ENCODE measurements at regions of chr1 and their contacts with region 1.

Region 1: GRCh38 chr1:85259118-85259911 is at the start of gene C1orf52:
- DNase-seq: peak; percentile 91 to 93 (median 91)
- H3K4me3 ChIP-seq: peak within 1 kb of the TSS; percentile 51 to 87 (median 63)
- H3K4me3 Mint-ChIP-seq: peak within 1 kb of the TSS; percentile 90 to 98
- H3K27ac ChIP-seq: peak within 1 kb of the TSS; percentile 62 to 89
- H3K27ac Mint-ChIP-seq: peak within 1 kb of the TSS; percentile 94 to 98 (median 96)
- H3K4me1 ChIP-seq: peaks cover 7 to 19% of the 10 kb centered on the region in 2 donors
- H3K4me1 Mint-ChIP-seq: peaks cover 22% of the 10 kb centered on the region
- H3K27me3 ChIP-seq: no peaks in the 10 kb centered on the region
- H3K27me3 Mint-ChIP-seq: no peaks in the 10 kb centered on the region
- CTCF ChIP-seq: peak; percentile 99
- polyA plus RNA-seq, gene C1orf52: 18.5 to 29.1 (median 19.7) TPM

Region 2: DNA sequence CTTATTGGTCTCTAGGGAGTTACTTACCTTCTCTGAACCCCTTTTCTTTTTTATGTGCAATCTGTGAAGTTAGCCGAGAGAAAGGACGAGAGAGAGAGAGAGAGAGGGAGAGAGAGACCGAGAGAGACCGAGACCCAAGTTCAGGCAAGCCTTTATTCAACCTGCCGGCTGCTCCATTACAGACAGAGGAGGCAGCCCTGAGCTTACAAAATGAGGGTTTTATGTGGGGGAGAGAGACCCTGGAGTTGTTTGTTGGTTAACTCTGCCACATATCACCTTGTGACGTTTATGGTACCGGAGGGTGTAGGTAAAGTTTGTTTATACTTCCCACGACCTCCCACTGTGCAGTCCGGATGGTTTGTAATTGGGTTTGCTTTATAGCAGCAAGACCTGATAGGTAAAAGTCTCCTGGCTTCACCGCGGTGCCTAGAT is 209.6 kb before region 1 on chr1:
- intact Hi-C with region 1: loop called in 1 of 2 experiments (anchors 10 kb)
- DNase-seq: no peak
- H3K4me3 ChIP-seq: no peak overlapping the region
- H3K4me3 Mint-ChIP-seq: peak overlapping the region in 1 of 2 donors; percentile 37
- H3K27ac ChIP-seq: no peak overlapping the region
- H3K27ac Mint-ChIP-seq: peak overlapping the region in 2 of 7 donors; percentile 8 to 17
- H3K4me1 ChIP-seq: peaks cover 12 to 17% of the 10 kb centered on the region in 2 donors
- H3K4me1 Mint-ChIP-seq: peaks cover 10% of the 10 kb centered on the region
- H3K27me3 ChIP-seq: peaks cover 64 to 68% of the 10 kb centered on the region in 2 donors
- H3K27me3 Mint-ChIP-seq: peaks cover 56 to 64% (median 58%) of the 10 kb centered on the region in 3 donors
- CTCF ChIP-seq: no peak

Region 3: DNA sequence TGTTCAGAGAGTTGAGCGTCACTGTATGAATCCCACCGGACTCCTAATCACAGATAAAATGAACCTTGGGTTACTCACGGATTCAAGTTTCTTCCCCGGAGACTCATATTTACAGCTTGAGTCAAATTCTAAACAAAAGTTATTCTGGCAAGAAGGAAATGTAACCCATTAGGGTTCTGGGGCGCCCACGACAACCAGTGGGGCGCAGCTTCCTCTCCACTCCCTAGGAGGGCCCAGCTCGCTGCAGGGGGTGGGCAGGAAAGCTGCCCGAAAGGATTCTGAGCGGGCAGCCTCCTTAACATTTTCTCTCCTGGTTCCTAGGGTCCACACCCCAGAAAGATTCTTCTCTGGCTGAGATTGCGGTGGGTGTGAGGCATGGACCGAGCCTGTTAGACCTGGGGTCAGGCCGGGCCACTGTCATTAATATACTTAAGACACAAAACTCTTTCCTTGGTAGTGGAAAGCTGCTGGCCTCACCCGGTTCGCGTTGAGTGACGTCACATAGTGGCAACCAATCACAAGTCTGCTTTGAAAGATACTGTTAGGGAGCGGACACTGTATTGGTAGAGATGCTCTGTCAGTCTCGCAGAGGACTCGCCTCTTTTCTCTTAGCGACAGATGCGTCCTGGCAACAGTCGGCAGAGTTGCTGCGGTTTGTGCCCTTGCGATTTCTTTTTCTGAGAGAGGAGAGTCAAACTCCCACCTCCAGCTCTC is 197.4 kb before region 1 on chr1:
- intact Hi-C with region 1: loop called (anchors 10 kb)
- DNase-seq: peak; percentile 94 to 95 (median 94)
- H3K4me3 ChIP-seq: peak overlapping the region; percentile 36 to 74 (median 41)
- H3K4me3 Mint-ChIP-seq: peak overlapping the region; percentile 71 to 92
- H3K27ac ChIP-seq: peak overlapping the region in 1 of 2 donors; percentile 64
- H3K27ac Mint-ChIP-seq: peak overlapping the region; percentile 55 to 94 (median 79)
- H3K4me1 ChIP-seq: peaks cover 11 to 21% of the 10 kb centered on the region in 2 donors
- H3K4me1 Mint-ChIP-seq: peaks cover 23% of the 10 kb centered on the region
- H3K27me3 ChIP-seq: no peaks in the 10 kb centered on the region
- H3K27me3 Mint-ChIP-seq: peaks cover 0 to 6% (median 3%) of the 10 kb centered on the region in 3 donors
- CTCF ChIP-seq: no peak

Region 4: DNA sequence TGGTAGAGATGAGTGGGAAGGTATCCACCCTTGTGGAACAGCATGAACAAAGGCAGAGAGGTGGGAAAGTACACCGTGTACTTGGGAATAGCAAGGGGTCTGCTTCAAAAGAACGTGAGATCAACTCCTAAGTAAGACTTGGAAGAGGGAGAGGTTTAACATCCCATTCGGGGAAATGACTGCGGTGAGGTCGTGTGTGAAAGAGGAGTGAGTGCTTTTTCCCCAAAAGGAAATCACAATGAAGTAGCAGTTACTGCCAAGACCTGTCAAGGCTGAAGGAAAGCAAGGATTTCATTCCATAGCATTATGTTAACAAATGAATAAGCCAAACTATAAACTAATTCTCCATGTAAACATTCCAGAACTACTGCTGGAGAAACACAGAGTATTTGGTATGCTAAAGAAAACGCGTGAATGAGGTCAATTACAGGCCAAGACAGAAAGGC is 38.5 kb before region 1 on chr1:
- intact Hi-C with region 1: no loop called
- DNase-seq: no peak
- H3K4me3 ChIP-seq: no peak overlapping the region
- H3K4me3 Mint-ChIP-seq: no peak overlapping the region
- H3K27ac ChIP-seq: no peak overlapping the region
- H3K27ac Mint-ChIP-seq: no peak overlapping the region
- H3K4me1 ChIP-seq: no peaks in the 10 kb centered on the region
- H3K4me1 Mint-ChIP-seq: no peaks in the 10 kb centered on the region
- H3K27me3 ChIP-seq: no peaks in the 10 kb centered on the region
- H3K27me3 Mint-ChIP-seq: peaks cover 4 to 7% (median 5%) of the 10 kb centered on the region in 3 donors
- CTCF ChIP-seq: no peak

Measured in CD14-positive monocyte (primary cell).